KBM-7 (cell line): ENCODE measurements at regions of chr12 and their contacts with region 1.

Region 1: GRCh38 chr12:120421701-120422100 is 16.2 kb upstream of the COX6A1 start:
- DNase-seq: no peak

Region 2: DNA sequence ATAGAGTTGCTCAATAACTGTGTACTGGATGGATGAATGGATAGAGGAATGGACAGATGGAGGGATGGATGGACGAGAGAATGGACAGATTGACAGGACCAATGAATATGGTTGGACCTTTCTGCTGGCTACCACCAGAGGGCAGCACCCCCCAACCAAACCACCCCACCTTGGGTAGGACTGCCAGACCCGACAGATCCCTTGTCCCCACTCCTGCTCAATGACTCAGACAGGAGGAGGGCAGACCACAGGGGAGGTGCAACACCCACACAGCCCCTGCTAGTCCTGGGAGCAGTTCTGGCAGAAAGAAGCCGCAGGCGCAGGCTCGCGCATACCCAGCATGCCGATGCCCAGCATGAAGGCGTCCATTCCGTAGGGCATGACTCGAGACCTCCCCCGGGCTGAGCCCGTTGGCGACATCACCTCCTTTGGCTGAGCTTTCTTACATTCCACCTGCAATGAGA is 65.1 kb before region 1 on chr12:
- in situ Hi-C with region 1: loop called (anchors 10 kb)
- DNase-seq: peak; percentile 86

Region 3: GRCh38 chr12:120580787-120581723 is 159.4 kb after region 1 on chr12 and contains the start of gene POP5:
- in situ Hi-C with region 1: no loop called
- DNase-seq: peak; percentile 97